Activated CD4-positive, alpha-beta T cell treated with anti-CD3 and anti-CD28 coated beads, Interleukin-2, amount 10 ng/mL, durations not matched to agents 7 days and 5 days (primary cell): ENCODE measurements at regions of chr6 and their contacts with region 1.

Region 1: GRCh38 chr6:3251462-3252314 is 7.1 kb upstream of the PSMG4 start:
- DNase-seq: peak; percentile 82
- H3K4me3 Mint-ChIP-seq: peak overlapping the region; percentile 15
- H3K27ac Mint-ChIP-seq: no peak overlapping the region
- H3K4me1 Mint-ChIP-seq: peaks cover 10% of the 10 kb centered on the region
- H3K27me3 Mint-ChIP-seq: peaks cover 41% of the 10 kb centered on the region

Region 2: GRCh38 chr6:3125815-3126214 is 125.9 kb before region 1 on chr6:
- CTCF ChIA-PET with region 1: interaction called, 17 read pairs
- POLR2A ChIA-PET with region 1: no interaction called
- DNase-seq: no peak
- H3K4me3 Mint-ChIP-seq: no peak overlapping the region
- H3K27ac Mint-ChIP-seq: no peak overlapping the region
- H3K4me1 Mint-ChIP-seq: peaks cover 4% of the 10 kb centered on the region
- H3K27me3 Mint-ChIP-seq: no peaks in the 10 kb centered on the region

Region 3: GRCh38 chr6:3263085-3263484 is 11.4 kb after region 1 on chr6:
- CTCF ChIA-PET with region 1: interaction called, 27 read pairs
- POLR2A ChIA-PET with region 1: no interaction called
- DNase-seq: no peak
- H3K4me3 Mint-ChIP-seq: no peak overlapping the region
- H3K27ac Mint-ChIP-seq: no peak overlapping the region
- H3K4me1 Mint-ChIP-seq: peaks cover 46% of the 10 kb centered on the region
- H3K27me3 Mint-ChIP-seq: no peaks in the 10 kb centered on the region

Region 4: GRCh38 chr6:3294921-3295871 is 43.5 kb after region 1 on chr6:
- CTCF ChIA-PET with region 1: no interaction called
- POLR2A ChIA-PET with region 1: no interaction called
- DNase-seq: no peak
- H3K4me3 Mint-ChIP-seq: no peak overlapping the region
- H3K27ac Mint-ChIP-seq: no peak overlapping the region
- H3K4me1 Mint-ChIP-seq: no peaks in the 10 kb centered on the region
- H3K27me3 Mint-ChIP-seq: no peaks in the 10 kb centered on the region

Region 5: DNA sequence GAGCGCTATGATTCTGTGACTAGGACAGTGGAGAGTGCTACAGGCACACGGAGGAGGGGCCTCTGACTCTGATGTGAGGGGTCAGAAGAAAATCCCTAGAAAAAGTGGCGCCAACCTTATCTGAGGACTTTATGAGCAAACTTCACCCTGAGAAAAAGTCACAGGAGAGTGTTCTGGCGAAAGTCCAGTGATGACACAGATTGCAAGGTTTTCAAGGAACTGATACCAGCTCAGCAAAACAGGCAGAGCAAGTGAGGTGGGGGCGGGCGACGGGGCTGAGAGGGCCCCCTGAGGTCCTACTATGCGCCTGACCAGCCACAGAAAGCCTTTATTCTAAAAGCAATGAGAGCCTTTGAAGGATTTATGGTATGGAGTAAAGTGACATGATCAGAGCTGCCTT is 131.8 kb after region 1 on chr6:
- CTCF ChIA-PET with region 1: no interaction called
- POLR2A ChIA-PET with region 1: no interaction called
- DNase-seq: no peak
- H3K4me3 Mint-ChIP-seq: no peak overlapping the region
- H3K27ac Mint-ChIP-seq: no peak overlapping the region
- H3K4me1 Mint-ChIP-seq: peaks cover 3% of the 10 kb centered on the region
- H3K27me3 Mint-ChIP-seq: peaks cover 4% of the 10 kb centered on the region